Common myeloid progenitor, CD34-positive (primary cell): ENCODE measurements at regions of chr2 and their contacts with region 1.

Region 1: DNA sequence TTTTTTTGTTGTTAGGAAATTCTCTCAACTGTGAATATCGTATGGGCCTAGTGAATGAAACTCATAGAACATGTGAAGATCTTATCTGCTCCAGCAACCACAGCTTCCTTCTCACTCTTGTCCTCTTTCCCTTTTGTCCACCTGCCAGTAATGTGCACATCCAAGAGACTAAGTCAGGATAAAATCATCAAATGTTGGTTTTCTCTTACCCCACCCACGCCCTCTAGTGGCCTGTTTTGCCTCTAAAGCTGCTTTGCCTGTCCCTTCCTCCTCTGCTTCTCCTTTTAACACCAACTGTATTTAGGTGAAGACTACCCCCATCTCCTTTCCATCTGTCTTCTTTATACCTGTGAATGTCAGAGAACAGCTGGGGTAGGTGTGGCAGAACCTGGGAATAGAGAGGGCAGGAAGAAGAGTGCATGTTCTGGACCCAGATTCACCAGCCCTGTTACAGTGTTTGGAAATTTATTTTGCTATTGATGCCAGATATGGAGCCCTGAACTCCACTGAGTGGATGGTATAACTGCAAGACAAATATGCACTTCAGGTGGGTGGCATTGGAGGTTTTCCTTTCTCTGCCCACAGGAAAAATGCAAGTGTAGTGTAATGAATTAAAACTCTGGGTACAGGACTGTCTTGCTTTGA is 8.4 kb upstream of the MGAT5 start:
- DNase-seq: peak; percentile 78 to 91 (median 90)
- H3K4me3 ChIP-seq: peak overlapping the region in 1 of 7 experiments; percentile 36
- H3K27ac ChIP-seq: no peak overlapping the region
- H3K4me1 ChIP-seq: peaks cover 5 to 23% (median 15%) of the 10 kb centered on the region in 4 experiments
- H3K27me3 ChIP-seq: no peaks in the 10 kb centered on the region

Region 2: DNA sequence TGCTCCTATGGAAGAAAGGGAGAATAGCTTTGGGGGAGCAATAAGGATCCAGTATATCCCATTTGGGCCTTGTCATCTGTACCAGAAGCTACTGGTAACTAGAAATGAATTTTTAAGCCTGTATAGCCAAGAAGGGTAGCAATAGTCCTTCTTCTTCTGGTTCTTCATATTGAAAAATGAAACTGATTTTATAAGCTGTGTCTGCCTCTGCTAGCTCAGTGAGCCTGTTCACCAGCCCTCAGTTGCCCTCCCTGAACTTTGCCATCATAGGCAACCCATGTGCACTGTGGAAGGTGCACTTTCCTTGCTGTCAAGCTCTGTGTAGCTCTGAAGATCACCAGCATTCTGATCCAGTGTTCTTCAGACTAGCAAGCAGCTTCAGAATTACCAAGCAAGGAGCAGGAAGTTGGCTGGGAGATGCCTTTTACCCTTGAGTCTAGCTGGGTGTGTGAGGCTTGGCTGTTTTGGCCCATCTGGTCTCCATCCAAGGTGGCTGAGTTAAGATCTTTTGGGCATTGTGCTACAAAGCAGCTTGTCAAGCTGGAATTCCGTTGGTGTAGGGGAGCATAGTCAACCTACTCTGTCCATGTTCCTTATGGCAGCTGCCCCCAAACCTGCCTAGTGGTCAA is 47.3 kb before region 1 on chr2:
- CTCF ChIA-PET with region 1: interaction called, 13 read pairs
- POLR2A ChIA-PET with region 1: interaction called, 3 read pairs
- DNase-seq: no peak
- H3K4me3 ChIP-seq: no peak overlapping the region
- H3K27ac ChIP-seq: no peak overlapping the region
- H3K4me1 ChIP-seq: peaks cover 4 to 27% (median 7%) of the 10 kb centered on the region in 4 experiments
- H3K27me3 ChIP-seq: no peaks in the 10 kb centered on the region

Region 3: DNA sequence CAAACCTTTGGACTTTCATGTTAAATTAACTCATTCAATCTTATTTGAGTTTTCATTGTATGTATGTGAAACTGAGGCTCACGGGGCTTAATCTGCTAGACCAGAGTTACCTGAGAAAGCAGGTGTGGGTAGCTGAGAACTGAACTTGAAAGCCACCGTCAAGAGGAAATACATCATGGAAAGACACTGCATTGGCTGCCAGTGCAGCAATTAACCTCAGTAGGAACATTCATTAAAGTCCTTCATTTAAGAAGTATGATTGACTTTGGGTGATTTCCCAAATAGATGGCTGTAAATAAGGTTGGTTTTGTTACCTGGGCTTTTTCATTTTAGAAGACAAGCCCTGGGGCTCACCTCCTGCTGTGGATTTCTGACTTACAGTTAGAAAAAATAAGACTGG is 28.1 kb before region 1 on chr2:
- CTCF ChIA-PET with region 1: interaction called, 16 read pairs
- POLR2A ChIA-PET with region 1: no interaction called
- DNase-seq: no peak
- H3K4me3 ChIP-seq: no peak overlapping the region
- H3K27ac ChIP-seq: no peak overlapping the region
- H3K4me1 ChIP-seq: peaks cover 13 to 37% (median 17%) of the 10 kb centered on the region in 4 experiments
- H3K27me3 ChIP-seq: no peaks in the 10 kb centered on the region

Region 4: DNA sequence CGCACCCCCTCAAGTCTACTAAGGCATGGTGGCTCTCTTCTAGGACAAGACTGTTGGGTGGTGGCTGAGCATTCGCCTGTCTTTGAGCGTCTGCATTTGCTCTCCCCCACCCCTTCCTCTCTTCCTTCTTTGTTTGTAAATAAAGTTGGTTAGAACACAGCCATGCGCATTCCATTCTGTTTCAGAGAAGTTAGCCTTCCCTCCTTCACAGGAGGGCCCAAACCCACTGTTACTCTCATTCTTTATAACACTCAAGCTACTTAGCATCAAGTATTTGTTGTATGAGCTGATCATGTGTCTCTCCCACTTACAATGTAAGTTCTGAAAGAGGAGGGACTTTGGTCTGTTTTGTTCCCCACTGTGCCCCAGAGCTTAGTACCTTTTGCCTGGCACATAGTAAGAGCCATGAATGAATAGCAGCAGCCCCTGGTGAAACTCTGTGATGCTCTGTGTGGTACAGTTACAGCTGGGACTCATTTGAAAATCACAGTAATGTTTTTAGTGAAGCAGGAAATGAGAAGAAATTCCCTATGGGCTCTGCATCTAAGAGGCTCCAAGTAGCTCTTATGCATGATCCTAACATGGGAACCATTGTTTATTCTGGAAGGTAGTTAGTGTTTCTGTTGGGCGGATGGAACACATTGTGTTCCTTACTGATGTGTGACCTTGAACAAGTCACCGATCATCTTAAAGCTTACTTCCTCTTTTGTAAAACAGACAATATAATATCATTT is 16.1 kb after region 1 on chr2:
- CTCF ChIA-PET with region 1: interaction called, 11 read pairs
- POLR2A ChIA-PET with region 1: no interaction called
- DNase-seq: peak in 1 of 3 donors; percentile 36
- H3K4me3 ChIP-seq: no peak overlapping the region
- H3K27ac ChIP-seq: no peak overlapping the region
- H3K4me1 ChIP-seq: peaks cover 7 to 28% (median 18%) of the 10 kb centered on the region in 4 experiments
- H3K27me3 ChIP-seq: no peaks in the 10 kb centered on the region